Endothelial cell of umbilical vein (primary cell): ENCODE measurements at regions of chr5 and their contacts with region 1.

Region 1: GRCh38 chr5:106171708-106172107 is 1499.0 kb downstream of the EFNA5 start:
- DNase-seq: peak; percentile 74
- H3K4me3 ChIP-seq: no peak overlapping the region
- H3K27ac ChIP-seq: peak overlapping the region; percentile 41
- H3K4me1 ChIP-seq: peaks cover 19% of the 10 kb centered on the region
- H3K27me3 ChIP-seq: no peaks in the 10 kb centered on the region
- CTCF ChIP-seq: no peak
- POLR2A ChIP-seq: no peak

Region 2: GRCh38 chr5:105956456-105957380 is 215.0 kb before region 1 on chr5:
- CTCF ChIA-PET with region 1: no interaction called
- POLR2A ChIA-PET with region 1: no interaction called
- dilution Hi-C with region 1: no loop called
- intact Hi-C with region 1: loop called (anchors 1 kb)
- DNase-seq: peak; percentile 70
- H3K4me3 ChIP-seq: no peak overlapping the region
- H3K27ac ChIP-seq: no peak overlapping the region
- H3K4me1 ChIP-seq: peaks cover 5% of the 10 kb centered on the region
- H3K27me3 ChIP-seq: no peaks in the 10 kb centered on the region
- CTCF ChIP-seq: no peak
- POLR2A ChIP-seq: no peak

Region 3: DNA sequence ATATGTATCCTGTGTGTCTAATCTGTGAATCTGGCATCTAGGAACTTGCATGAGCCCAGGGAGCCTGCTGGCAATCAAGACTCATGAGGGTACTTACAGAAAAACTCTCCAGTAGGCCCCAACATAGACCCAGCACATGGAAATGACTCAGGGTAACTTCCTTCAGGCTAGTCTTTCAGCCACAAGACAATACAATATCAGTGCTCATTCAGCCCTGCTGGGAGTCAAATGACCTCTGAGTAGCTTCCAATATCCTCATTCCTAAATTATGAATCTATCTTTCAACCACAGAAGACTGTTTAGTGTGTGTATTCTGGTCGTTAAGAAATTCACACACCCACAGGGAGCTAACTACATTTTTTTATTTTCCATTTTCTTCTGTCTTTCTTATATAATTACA is 226.0 kb after region 1 on chr5:
- CTCF ChIA-PET with region 1: no interaction called
- POLR2A ChIA-PET with region 1: no interaction called
- dilution Hi-C with region 1: no loop called
- intact Hi-C with region 1: loop called (anchors 5 kb)
- DNase-seq: peak; percentile 92
- H3K4me3 ChIP-seq: no peak overlapping the region
- H3K27ac ChIP-seq: peak overlapping the region; percentile 70
- H3K4me1 ChIP-seq: peaks cover 16% of the 10 kb centered on the region
- H3K27me3 ChIP-seq: no peaks in the 10 kb centered on the region
- CTCF ChIP-seq: no peak
- POLR2A ChIP-seq: no peak

Region 4: GRCh38 chr5:106408570-106408969 is 236.9 kb after region 1 on chr5:
- CTCF ChIA-PET with region 1: no interaction called
- POLR2A ChIA-PET with region 1: no interaction called
- dilution Hi-C with region 1: no loop called
- intact Hi-C with region 1: no loop called
- DNase-seq: no peak
- H3K4me3 ChIP-seq: no peak overlapping the region
- H3K27ac ChIP-seq: no peak overlapping the region
- H3K4me1 ChIP-seq: no peaks in the 10 kb centered on the region
- H3K27me3 ChIP-seq: no peaks in the 10 kb centered on the region
- CTCF ChIP-seq: no peak
- POLR2A ChIP-seq: no peak

Region 5: GRCh38 chr5:107322936-107323335 is 1151.2 kb after region 1 on chr5:
- CTCF ChIA-PET with region 1: no interaction called
- POLR2A ChIA-PET with region 1: no interaction called
- dilution Hi-C with region 1: no loop called
- intact Hi-C with region 1: loop called (anchors 1 kb)
- DNase-seq: peak; percentile 57
- H3K4me3 ChIP-seq: no peak overlapping the region
- H3K27ac ChIP-seq: no peak overlapping the region
- H3K4me1 ChIP-seq: peaks cover 24% of the 10 kb centered on the region
- H3K27me3 ChIP-seq: no peaks in the 10 kb centered on the region
- CTCF ChIP-seq: no peak
- POLR2A ChIP-seq: no peak